K562 (cell line): ENCODE measurements at regions of chr10 and their contacts with region 1.

Region 1: DNA sequence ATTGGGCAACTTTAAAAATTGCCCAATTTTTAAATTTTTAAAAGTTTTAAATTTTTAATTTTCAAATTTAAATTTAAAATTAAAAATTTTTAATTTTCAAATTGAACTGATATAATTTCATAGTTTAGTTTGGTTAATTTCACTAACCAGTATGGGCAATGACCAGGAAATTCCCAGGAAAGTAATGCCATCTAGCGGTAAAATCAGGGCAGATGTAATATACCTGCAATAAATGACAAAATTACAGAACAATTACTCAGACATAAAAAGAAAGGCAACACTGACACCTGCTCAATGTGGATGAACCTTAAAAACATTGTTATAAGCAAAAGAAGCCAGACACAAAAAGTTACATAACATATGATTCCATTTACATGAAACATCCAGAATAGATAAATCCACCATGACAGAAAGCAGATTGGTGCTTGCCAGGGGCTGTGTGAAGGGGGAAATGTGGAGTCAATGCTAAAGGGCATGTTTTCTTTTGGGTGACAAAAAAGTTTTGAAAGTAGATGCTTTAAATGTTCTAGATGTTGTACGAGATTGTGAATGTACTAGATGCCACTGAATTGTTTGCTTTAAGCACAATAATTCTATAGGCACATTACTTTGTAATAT is 28.6 kb upstream of the SLC16A12 start:
- DNase-seq: peak; percentile 20 to 34 (median 22)
- ATAC-seq: peak; percentile 78
- H3K4me3 ChIP-seq: no peak overlapping the region
- H3K27ac ChIP-seq: no peak overlapping the region
- H3K4me1 ChIP-seq: no peaks in the 10 kb centered on the region
- H3K27me3 ChIP-seq: peaks cover 0 to 4% of the 10 kb centered on the region in 2 experiments; a peak in 1 of 5 replicates
- CTCF ChIP-seq: peak; percentile 33 to 70 (median 43); a peak in 3 of 6 replicates
- EP300 ChIP-seq: no peak
- POLR2A ChIP-seq: no peak
- RAD21 ChIP-seq: peak; percentile 71 to 74

Region 2: DNA sequence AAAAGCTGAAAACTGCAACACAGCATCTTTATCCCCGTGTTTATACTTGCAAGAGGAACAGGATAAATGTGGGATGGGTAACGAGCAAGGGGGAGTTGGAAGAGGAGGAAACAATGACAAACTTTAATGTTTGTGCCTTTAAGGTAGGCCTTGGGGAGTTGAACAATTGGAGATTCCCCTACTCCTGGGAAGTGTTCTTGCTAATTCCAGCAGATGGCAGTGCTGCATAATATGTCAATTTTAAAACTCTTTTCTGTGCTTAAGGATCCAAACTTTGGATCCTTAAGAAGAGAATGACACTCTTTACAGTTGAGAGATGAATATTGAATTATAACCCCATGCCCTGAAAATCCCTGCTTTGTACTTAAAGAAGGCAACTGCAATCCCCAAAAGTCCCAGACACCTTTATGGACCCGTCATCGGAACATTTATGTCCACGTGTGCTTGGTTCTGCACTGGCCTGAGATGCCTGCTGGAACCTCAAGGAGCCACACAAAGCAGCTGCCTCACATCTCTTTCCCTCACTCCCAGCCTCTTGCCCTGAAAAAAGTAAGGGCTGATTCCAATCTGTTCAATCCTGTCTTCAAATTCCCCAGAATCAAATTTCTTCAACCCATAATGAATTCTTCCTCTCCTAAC is 137.6 kb before region 1 on chr10:
- CTCF ChIA-PET with region 1: no interaction called
- POLR2A ChIA-PET with region 1: no interaction called
- in situ Hi-C with region 1: no loop called
- intact Hi-C with region 1: loop called (anchors 2 kb)
- DNase-seq: peak in 2 of 4 experiments; percentile 32 to 46
- ATAC-seq: peak; percentile 84
- H3K4me3 ChIP-seq: no peak overlapping the region
- H3K27ac ChIP-seq: no peak overlapping the region
- H3K4me1 ChIP-seq: no peaks in the 10 kb centered on the region
- H3K27me3 ChIP-seq: peaks cover 0 to 3% of the 10 kb centered on the region in 2 experiments; a peak in 2 of 5 replicates
- CTCF ChIP-seq: peak; percentile 41 to 73 (median 52); a peak in 4 of 6 replicates
- EP300 ChIP-seq: no peak
- POLR2A ChIP-seq: no peak
- RAD21 ChIP-seq: peak; percentile 68 to 81